ENCODE measurements at regions of chr6 and their contacts with region 1.

Region 1: DNA sequence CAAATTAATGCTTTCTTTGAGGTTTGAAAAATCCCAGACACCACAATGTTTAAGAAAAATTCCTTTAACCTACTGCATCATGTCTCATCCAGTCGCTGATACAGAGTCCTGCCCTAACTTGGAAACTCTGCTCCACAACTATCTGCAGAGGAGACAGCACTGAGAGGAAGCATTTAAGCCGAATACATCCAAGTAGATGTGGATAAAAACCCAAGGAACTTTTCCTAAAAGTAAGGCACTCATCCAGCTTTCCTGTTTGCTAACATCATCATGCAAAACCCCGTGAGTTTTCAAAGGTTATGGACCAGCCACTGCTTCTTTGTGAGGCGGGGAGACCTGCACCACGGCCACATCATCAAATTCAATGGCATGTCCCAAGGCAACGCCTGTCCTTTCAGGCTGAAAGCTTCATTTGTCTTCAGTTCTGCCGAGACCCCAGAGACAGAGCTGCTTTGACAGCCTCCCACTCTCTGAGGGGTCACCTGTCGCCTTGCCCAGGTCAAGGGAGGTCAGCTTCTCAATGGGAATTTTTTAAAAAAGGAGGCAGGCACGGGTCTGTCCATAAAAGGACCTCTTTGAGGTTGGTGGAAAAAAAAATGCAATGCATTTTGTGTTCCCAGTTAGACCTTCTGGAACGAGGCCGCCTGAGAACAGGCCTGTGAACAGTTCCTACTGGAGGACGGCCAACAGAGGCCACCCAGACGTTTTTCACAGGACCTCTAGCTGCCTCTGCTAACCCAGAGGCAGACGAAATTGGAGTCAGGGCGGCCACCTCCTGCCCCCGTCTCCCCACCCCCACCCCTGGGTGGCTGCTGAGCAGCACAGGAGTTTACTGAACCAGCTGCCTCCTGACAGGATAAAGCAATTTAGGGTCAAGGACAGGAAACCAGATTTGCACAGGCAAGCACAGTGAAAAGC is 142.5 kb upstream of the HDDC2 start:
- DNase-seq: peak; percentile 74 to 84 (median 81)
- ATAC-seq: peak; percentile 82 to 94 (median 86)
- H3K4me3 ChIP-seq: peak overlapping the region in 1 of 12 donors; percentile 26
- H3K27ac ChIP-seq: peak overlapping the region; percentile 18 to 78 (median 52)
- H3K4me1 ChIP-seq: peaks cover 0 to 15% (median 4%) of the 10 kb centered on the region in 12 donors
- H3K27me3 ChIP-seq: no peaks in the 10 kb centered on the region
- CTCF ChIP-seq: no peak
- POLR2A ChIP-seq: no peak

Region 2: DNA sequence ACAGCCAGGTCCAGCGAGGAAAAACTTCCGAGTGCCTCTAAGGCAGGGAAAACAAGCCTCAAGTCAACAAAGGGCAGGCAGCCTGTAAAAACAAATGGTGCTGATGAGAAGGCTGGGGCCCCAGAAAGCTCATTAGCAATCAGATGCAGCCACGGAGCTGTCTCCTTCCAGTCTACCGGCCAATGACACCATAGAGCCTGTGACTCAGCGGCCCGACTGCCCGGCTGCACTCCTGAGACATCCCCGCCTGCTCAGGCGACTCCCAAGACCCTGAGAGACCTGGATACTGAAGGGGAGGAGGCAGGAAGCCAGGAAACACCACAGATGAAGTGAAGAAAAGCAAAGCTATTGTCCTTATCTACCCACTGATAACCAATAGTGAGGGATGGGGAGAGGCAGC is 22.4 kb before region 1 on chr6:
- intact Hi-C with region 1: loop called in 1 of 10 experiments (anchors 1 kb)
- DNase-seq: peak; percentile 26 to 68 (median 46)
- ATAC-seq: peak in 3 of 4 donors; percentile 60 to 91 (median 66)
- H3K4me3 ChIP-seq: no peak overlapping the region
- H3K27ac ChIP-seq: peak overlapping the region in 4 of 12 donors; percentile 4 to 27 (median 25)
- H3K4me1 ChIP-seq: peaks cover 0 to 5% (median 0%) of the 10 kb centered on the region in 12 donors
- H3K27me3 ChIP-seq: no peaks in the 10 kb centered on the region
- CTCF ChIP-seq: no peak
- POLR2A ChIP-seq: no peak

Region 3: DNA sequence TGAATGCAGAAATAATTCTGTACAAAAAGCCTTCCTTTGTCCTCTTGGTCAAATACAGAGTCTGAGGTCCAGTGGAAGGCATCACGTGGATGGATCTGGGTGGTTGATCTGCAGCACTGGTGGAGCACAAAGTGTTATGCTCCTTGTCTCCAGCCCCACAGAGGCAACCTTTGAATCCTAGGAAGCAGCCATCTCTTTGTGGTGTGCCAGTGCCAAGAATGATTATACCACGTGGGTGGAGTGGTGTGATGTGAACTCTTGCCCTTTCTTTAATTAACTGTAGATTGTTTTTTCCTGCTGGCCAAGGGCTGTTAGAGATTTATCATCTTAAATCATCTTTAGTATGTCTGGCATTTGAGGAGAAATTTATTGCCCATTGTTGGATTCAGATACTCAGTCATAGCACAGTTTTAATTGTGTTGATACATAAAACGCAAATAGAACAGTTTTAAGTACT is 377.6 kb after region 1 on chr6:
- intact Hi-C with region 1: no loop called
- DNase-seq: peak in 2 of 5 donors; percentile 18 to 30
- ATAC-seq: peak; percentile 19 to 78 (median 75)
- H3K4me3 ChIP-seq: no peak overlapping the region
- H3K27ac ChIP-seq: peak overlapping the region in 2 of 12 donors; percentile 1 to 3
- H3K4me1 ChIP-seq: peaks cover 0 to 55% (median 27%) of the 10 kb centered on the region in 12 donors
- H3K27me3 ChIP-seq: no peaks in the 10 kb centered on the region
- CTCF ChIP-seq: no peak
- POLR2A ChIP-seq: no peak